ENCODE measurements at regions of chr11 and their contacts with region 1.

Region 1: GRCh38 chr11:8566613-8567210 is 27.3 kb downstream of the STK33 start:
- DNase-seq: peak; percentile 50
- ATAC-seq: peak; percentile 83
- H3K4me3 ChIP-seq: no peak overlapping the region
- H3K27ac ChIP-seq: no peak overlapping the region
- H3K4me1 ChIP-seq: no peaks in the 10 kb centered on the region
- H3K27me3 ChIP-seq: peaks cover 34% of the 10 kb centered on the region
- CTCF ChIP-seq: peak; percentile 87

Region 2: DNA sequence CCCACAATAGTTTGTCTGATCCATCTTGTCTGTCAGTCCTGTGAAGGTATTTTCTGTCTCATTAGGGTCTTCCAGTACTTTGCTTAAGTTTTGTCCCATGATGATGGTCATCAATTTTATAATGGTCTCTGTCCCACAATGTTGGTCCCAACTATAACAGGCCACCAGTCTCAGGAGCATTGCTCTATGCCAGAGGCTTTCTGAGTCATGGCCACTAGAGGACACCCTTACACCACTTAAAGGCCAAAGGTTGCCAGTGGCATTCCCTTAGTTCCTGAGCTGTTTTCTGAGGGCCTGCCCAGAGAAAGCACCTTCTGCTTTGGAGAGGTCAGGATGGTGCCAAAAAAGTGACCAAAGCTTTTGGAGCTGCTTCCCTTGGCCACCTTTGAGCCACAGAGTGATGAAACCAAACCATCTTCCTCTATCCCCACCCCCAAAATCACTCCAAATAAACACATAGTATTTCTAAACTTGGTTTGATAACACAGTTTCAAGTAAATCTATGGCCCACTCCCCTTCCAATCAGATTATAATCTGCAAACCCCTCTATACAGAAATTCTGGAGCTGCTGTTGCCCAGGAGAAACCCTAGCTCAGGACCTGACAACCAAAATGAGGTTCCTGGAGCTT is 560.2 kb before region 1 on chr11:
- CTCF ChIA-PET with region 1: interaction called, 3 read pairs
- POLR2A ChIA-PET with region 1: no interaction called
- in situ Hi-C with region 1: no loop called
- intact Hi-C with region 1: loop called (anchors 10 kb)
- DNase-seq: peak; percentile 77
- ATAC-seq: peak; percentile 95
- H3K4me3 ChIP-seq: no peak overlapping the region
- H3K27ac ChIP-seq: no peak overlapping the region
- H3K4me1 ChIP-seq: no peaks in the 10 kb centered on the region
- H3K27me3 ChIP-seq: peaks cover 2% of the 10 kb centered on the region; the same call in 1 of the 2 replicates
- CTCF ChIP-seq: peak; percentile 98

Region 3: DNA sequence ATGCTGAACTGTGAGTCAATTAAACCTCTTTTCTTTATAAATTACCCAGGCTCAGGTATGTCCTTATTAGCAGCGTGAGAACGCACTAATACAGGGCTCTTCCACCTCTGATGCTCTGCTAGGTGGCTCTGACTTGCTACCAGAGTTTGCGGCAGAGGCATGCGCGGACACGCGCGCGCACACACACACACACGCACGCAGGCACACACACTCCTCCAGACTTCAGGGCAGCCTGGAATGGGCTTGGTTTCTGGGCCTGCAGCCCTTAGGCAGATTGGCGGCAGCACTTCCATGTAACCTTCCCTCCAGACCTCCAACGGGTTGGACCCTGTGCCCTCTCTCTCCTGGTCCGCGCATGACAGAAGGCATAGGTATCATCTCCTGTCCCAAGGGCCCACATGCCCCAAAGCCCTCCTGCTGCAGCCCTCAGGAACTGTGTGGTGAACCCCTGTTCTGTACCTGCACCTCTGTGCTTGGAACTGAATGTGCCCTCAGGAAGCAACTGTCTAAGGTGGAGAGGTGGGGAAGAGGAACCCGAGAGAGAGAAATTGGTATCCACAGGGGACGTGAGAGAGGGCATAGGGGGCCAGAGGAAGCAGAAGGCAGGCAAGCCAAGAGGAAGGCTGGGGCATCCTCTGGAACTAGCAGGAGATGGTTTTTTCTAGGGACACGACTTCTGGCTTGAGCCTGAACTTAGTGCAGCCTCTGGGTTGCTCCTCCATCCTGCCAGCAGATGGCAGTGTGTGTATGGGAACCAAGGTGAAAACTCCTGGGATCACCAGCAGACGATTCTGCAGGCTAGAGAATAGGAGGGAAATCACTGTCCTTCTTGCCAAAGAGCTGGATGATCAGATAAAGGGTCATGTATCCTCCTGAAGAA is 374.5 kb before region 1 on chr11:
- CTCF ChIA-PET with region 1: interaction called, 8 read pairs
- POLR2A ChIA-PET with region 1: no interaction called
- in situ Hi-C with region 1: no loop called
- intact Hi-C with region 1: loop called (anchors 1 kb)
- DNase-seq: peak; percentile 74
- ATAC-seq: peak; percentile 93
- H3K4me3 ChIP-seq: no peak overlapping the region
- H3K27ac ChIP-seq: no peak overlapping the region
- H3K4me1 ChIP-seq: no peaks in the 10 kb centered on the region
- H3K27me3 ChIP-seq: peaks cover 15% of the 10 kb centered on the region
- CTCF ChIP-seq: peak; percentile 98

Region 4: GRCh38 chr11:8225589-8226036 is 341.1 kb before region 1 on chr11:
- CTCF ChIA-PET with region 1: interaction called, 10 read pairs
- POLR2A ChIA-PET with region 1: no interaction called
- in situ Hi-C with region 1: no loop called
- intact Hi-C with region 1: loop called (anchors 1 kb)
- DNase-seq: peak; percentile 55
- ATAC-seq: peak; percentile 81
- H3K4me3 ChIP-seq: no peak overlapping the region
- H3K27ac ChIP-seq: no peak overlapping the region
- H3K4me1 ChIP-seq: no peaks in the 10 kb centered on the region
- H3K27me3 ChIP-seq: no peaks in the 10 kb centered on the region
- CTCF ChIP-seq: peak; percentile 99

Region 5: GRCh38 chr11:8338138-8338537 is 228.6 kb before region 1 on chr11:
- CTCF ChIA-PET with region 1: interaction called, 5 read pairs
- POLR2A ChIA-PET with region 1: no interaction called
- in situ Hi-C with region 1: no loop called
- intact Hi-C with region 1: loop called (anchors 2 kb)
- DNase-seq: no peak
- ATAC-seq: peak; percentile 82
- H3K4me3 ChIP-seq: no peak overlapping the region
- H3K27ac ChIP-seq: no peak overlapping the region
- H3K4me1 ChIP-seq: peaks cover 5% of the 10 kb centered on the region; the same call in 1 of the 2 replicates
- H3K27me3 ChIP-seq: no peaks in the 10 kb centered on the region
- CTCF ChIP-seq: peak; percentile 98

Region 6: DNA sequence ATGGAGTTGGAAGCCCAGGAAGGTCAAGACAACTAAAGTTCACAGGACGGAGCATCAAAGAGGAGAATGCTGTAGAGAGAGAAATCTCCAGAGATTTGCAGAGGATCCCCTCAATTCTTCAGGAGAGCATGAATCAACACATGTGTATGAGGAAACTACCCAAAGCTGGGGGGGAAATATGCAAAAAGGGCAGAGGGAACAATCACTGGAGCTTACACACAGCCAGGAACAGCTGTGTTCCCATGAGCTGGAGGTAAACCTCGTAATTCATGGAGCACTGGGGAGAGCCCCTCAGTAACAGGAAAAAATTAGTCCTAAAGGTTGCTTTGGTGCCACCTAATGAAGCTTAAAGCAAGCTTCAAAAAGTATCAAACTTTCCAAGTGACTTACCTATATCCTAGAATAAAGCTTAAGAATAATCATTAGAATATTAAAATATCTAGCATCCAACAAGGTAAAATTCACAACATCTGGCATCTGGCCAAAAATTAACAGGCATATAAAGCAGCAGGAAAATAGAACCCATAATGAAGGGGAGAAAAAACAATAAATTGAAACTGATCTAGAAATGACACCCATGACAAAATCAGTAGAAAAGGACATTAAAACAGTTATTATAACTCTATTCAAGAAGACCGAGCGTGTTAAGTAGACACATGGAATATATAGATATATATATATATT is 106.9 kb before region 1 on chr11:
- CTCF ChIA-PET with region 1: no interaction called
- POLR2A ChIA-PET with region 1: no interaction called
- in situ Hi-C with region 1: no loop called
- intact Hi-C with region 1: no loop called
- DNase-seq: no peak
- ATAC-seq: no peak
- H3K4me3 ChIP-seq: no peak overlapping the region
- H3K27ac ChIP-seq: no peak overlapping the region
- H3K4me1 ChIP-seq: no peaks in the 10 kb centered on the region
- H3K27me3 ChIP-seq: peaks cover 10% of the 10 kb centered on the region
- CTCF ChIP-seq: peak; percentile 8; the same call in 1 of the 2 replicates